H1 (cell line): ENCODE measurements at regions of chr16 and their contacts with region 1.

Region 1: GRCh38 chr16:70737377-70738082 is 51.7 kb upstream of the MTSS2 start:
- DNase-seq: no peak
- H3K4me3 ChIP-seq: no peak overlapping the region
- H3K27ac ChIP-seq: no peak overlapping the region
- H3K4me1 ChIP-seq: peaks cover 0 to 12% (median 6%) of the 10 kb centered on the region in 4 experiments; a peak in 6 of 7 replicates
- H3K27me3 ChIP-seq: no peaks in the 10 kb centered on the region
- CTCF ChIP-seq: no peak
- EP300 ChIP-seq: no peak
- POLR2A ChIP-seq: no peak
- RAD21 ChIP-seq: no peak

Region 2: DNA sequence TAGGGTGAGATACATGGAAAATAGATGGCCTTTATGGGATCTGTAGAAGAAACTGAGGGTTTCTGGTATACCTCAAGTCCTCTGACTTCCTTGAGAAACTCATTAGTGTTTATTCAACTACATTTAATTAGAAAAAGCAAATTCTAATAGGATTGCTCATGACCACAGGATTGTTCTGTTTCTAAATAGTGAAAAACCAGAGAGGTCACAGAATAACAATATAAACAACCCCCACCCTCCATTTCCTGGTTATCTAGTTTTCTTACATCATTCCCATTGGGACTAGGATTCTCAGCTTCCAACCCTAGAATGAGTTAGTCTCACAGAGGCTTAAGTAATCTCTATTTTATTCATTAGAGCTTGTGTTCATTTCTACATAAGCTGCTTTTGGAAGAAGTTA is 183.9 kb before region 1 on chr16:
- CTCF ChIA-PET with region 1: no interaction called
- POLR2A ChIA-PET with region 1: no interaction called
- DNase-seq: no peak
- H3K4me3 ChIP-seq: no peak overlapping the region
- H3K27ac ChIP-seq: no peak overlapping the region
- H3K4me1 ChIP-seq: no peaks in the 10 kb centered on the region
- H3K27me3 ChIP-seq: no peaks in the 10 kb centered on the region
- CTCF ChIP-seq: no peak
- EP300 ChIP-seq: no peak
- POLR2A ChIP-seq: no peak
- RAD21 ChIP-seq: no peak

Region 3: GRCh38 chr16:70589998-70590471 is 147.5 kb before region 1 on chr16:
- CTCF ChIA-PET with region 1: no interaction called
- POLR2A ChIA-PET with region 1: no interaction called
- DNase-seq: no peak
- H3K4me3 ChIP-seq: no peak overlapping the region
- H3K27ac ChIP-seq: no peak overlapping the region
- H3K4me1 ChIP-seq: peaks cover 2 to 7% (median 3%) of the 10 kb centered on the region in 4 experiments; a peak in 4 of 7 replicates
- H3K27me3 ChIP-seq: no peaks in the 10 kb centered on the region
- CTCF ChIP-seq: no peak
- EP300 ChIP-seq: no peak
- POLR2A ChIP-seq: no peak
- RAD21 ChIP-seq: no peak

Region 4: DNA sequence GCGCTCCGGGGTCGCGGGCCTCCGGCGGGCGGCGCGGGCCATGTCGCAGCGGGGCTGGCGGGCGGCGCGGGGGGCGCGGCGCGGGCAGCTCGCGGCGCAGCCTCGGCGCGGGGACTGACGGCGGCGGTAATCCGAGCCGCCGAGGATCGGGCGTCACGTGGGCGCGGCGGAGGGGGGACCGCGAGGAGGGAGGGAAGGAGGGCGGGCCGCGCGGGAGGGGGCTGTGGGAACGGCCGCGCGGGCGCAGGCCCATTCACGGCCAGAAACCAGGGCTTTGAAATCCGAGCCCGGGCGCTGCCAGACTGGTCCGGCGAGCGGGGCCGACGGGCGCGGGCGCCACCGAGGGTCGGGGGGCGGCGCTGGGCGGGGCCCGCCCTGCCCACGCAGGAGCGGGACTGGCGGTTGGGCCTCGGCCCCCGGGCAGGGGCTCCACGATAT is 51.6 kb before region 1 on chr16 and contains the start of gene MTSS2:
- CTCF ChIA-PET with region 1: interaction called, 148 read pairs
- POLR2A ChIA-PET with region 1: interaction called, 12 read pairs
- DNase-seq: peak in 1 of 2 experiments; percentile 83
- H3K4me3 ChIP-seq: peak within 1 kb of the TSS; percentile 49 to 81 (median 65)
- H3K27ac ChIP-seq: no peak within 1 kb of the TSS
- H3K4me1 ChIP-seq: peaks cover 0 to 25% (median 14%) of the 10 kb centered on the region in 4 experiments; a peak in 6 of 7 replicates
- H3K27me3 ChIP-seq: peaks cover 0 to 8% (median 3%) of the 10 kb centered on the region in 4 experiments; a peak in 4 of 7 replicates
- CTCF ChIP-seq: no peak
- EP300 ChIP-seq: no peak
- POLR2A ChIP-seq: 0 out of 3 replicates have a peak, but pooled peaks of 1 of the 2 experiments have one; percentile 19
- RAD21 ChIP-seq: no peak
- total RNA-seq, gene MTSS2: 34.2 and 36.7 TPM in 2 replicates

Region 5: DNA sequence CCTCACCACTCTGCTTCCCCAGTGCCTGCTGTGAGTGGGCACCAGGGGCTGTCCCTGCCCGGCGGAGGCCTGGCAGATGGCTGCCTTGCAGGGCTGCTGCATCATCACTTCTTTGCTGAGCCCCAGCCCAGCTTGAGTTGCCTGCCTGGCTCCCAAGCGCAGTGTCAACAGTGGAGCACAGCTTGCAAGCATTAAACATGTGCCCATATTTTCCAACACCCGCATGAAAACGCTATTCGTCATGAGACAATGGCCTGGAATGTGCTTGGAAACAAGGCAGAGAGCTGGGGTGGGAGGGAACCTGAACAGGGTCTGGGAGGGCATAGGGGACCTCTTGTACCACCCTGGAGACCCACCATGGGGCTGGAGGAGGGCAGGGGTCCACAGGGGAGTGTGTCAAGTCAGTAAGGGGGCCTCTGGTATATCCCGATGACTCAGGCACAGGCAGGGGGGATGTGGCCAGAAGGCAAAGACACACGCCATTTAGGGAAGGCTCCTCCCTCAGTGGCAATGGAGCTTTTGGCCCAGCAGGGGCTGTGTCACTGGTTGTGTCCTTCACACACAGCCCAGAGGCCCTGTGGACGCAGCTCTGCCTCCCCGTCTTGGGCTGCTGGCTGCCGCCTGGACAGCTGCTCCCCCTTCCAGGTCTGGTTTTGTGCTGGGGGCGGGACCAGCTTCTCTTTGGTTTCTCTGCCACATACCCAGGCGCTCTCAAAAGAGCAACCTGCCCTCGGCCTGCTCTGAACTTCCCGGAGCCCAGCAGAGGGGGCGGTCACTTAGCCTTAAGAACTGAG is 34.3 kb before region 1 on chr16:
- CTCF ChIA-PET with region 1: interaction called, 18 read pairs
- POLR2A ChIA-PET with region 1: no interaction called
- DNase-seq: no peak
- H3K4me3 ChIP-seq: no peak overlapping the region
- H3K27ac ChIP-seq: no peak overlapping the region
- H3K4me1 ChIP-seq: peaks cover 0 to 14% (median 9%) of the 10 kb centered on the region in 4 experiments; a peak in 5 of 7 replicates
- H3K27me3 ChIP-seq: no peaks in the 10 kb centered on the region
- CTCF ChIP-seq: peak in 1 of 3 experiments; percentile 16; a peak in 1 of 4 replicates
- EP300 ChIP-seq: no peak
- POLR2A ChIP-seq: no peak
- RAD21 ChIP-seq: no peak

Region 6: DNA sequence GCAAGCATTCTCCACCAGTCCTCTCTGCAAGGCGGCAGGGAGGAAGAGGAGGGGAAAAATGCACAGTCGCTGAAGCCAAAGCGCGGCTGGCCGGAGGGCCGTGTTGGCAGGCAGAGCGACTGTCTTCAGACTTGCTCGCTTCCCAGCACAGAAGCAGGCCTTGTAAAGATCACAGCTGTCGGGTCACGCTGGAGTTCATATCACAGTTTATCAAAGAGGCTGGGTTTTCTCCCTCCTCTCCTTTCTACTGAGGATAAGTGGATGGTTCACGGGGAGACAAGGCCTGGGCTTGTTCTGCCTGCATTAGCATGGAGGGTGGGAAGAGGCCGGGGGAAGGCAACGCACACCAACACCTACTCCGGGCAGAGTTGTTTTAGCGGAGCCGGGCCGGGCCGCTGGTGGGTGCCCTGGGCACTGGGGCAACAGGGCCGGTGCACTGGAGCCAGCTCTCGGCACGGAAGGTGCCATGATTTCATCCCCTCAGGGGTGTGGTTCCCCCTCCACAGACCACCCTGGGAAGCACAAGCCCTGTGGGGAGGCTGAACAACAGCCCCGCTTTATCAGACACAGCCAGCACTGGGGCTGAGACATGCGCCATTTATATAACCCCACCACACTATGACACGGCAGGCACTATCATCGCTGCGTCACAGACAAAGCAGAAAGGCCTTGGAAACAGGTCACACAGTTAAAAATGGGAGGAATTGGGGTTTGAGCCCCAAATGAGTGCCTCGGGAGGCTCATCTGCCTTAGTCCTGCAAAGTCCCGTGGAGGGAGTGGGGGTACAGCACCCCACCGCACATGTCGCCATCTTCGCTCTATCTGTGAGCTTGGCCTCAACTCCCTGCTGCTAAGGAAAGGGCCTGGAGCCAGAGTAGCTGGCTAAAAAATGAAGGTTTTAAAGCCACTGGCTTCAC is 11.4 kb before region 1 on chr16:
- CTCF ChIA-PET with region 1: interaction called, 13 read pairs
- POLR2A ChIA-PET with region 1: no interaction called
- DNase-seq: no peak
- H3K4me3 ChIP-seq: no peak overlapping the region
- H3K27ac ChIP-seq: no peak overlapping the region; the same call in 1 of the 2 replicates
- H3K4me1 ChIP-seq: peaks cover 0 to 6% (median 2%) of the 10 kb centered on the region in 4 experiments; a peak in 1 of 7 replicates
- H3K27me3 ChIP-seq: no peaks in the 10 kb centered on the region
- CTCF ChIP-seq: no peak
- EP300 ChIP-seq: no peak
- POLR2A ChIP-seq: no peak
- RAD21 ChIP-seq: no peak

Region 7: GRCh38 chr16:70781800-70782199 is 44.3 kb after region 1 on chr16:
- CTCF ChIA-PET with region 1: no interaction called
- POLR2A ChIA-PET with region 1: no interaction called
- DNase-seq: no peak
- H3K4me3 ChIP-seq: no peak overlapping the region
- H3K27ac ChIP-seq: no peak overlapping the region
- H3K4me1 ChIP-seq: no peaks in the 10 kb centered on the region; a peak in 1 of 7 replicates
- H3K27me3 ChIP-seq: no peaks in the 10 kb centered on the region
- CTCF ChIP-seq: no peak
- EP300 ChIP-seq: no peak
- POLR2A ChIP-seq: no peak
- RAD21 ChIP-seq: no peak